ENCODE measurements at regions of chr11 and their contacts with region 1.

Region 1: GRCh38 chr11:83303316-83303715 is 17.1 kb upstream of the CCDC90B start:
- DNase-seq: no peak
- ATAC-seq: no peak
- H3K4me3 ChIP-seq: no peak overlapping the region
- H3K4me3 Mint-ChIP-seq: no peak overlapping the region
- H3K27ac ChIP-seq: no peak overlapping the region
- H3K27ac Mint-ChIP-seq: no peak overlapping the region
- H3K4me1 ChIP-seq: no peaks in the 10 kb centered on the region
- H3K4me1 Mint-ChIP-seq: no peaks in the 10 kb centered on the region
- H3K27me3 ChIP-seq: peaks cover 0 to 4% of the 10 kb centered on the region in 2 experiments
- H3K27me3 Mint-ChIP-seq: peaks cover 5 to 8% of the 10 kb centered on the region in 2 donors

Region 2: GRCh38 chr11:83205608-83206185 is 97.6 kb before region 1 on chr11:
- CTCF ChIA-PET with region 1: no interaction called
- POLR2A ChIA-PET with region 1: no interaction called
- DNase-seq: no peak
- ATAC-seq: no peak
- H3K4me3 ChIP-seq: no peak overlapping the region
- H3K4me3 Mint-ChIP-seq: no peak overlapping the region
- H3K27ac ChIP-seq: no peak overlapping the region
- H3K27ac Mint-ChIP-seq: no peak overlapping the region
- H3K4me1 ChIP-seq: no peaks in the 10 kb centered on the region
- H3K4me1 Mint-ChIP-seq: no peaks in the 10 kb centered on the region
- H3K27me3 ChIP-seq: no peaks in the 10 kb centered on the region
- H3K27me3 Mint-ChIP-seq: no peaks in the 10 kb centered on the region

Region 3: GRCh38 chr11:83326311-83326710 is 23.0 kb after region 1 on chr11:
- CTCF ChIA-PET with region 1: no interaction called
- POLR2A ChIA-PET with region 1: interaction called in 1 of 2 experiments, 12 read pairs
- DNase-seq: no peak
- ATAC-seq: no peak
- H3K4me3 ChIP-seq: no peak overlapping the region
- H3K4me3 Mint-ChIP-seq: no peak overlapping the region
- H3K27ac ChIP-seq: no peak overlapping the region
- H3K27ac Mint-ChIP-seq: no peak overlapping the region
- H3K4me1 ChIP-seq: no peaks in the 10 kb centered on the region
- H3K4me1 Mint-ChIP-seq: no peaks in the 10 kb centered on the region
- H3K27me3 ChIP-seq: peaks cover 0 to 11% of the 10 kb centered on the region in 2 experiments
- H3K27me3 Mint-ChIP-seq: peaks cover 25 to 40% of the 10 kb centered on the region in 2 donors